Mammary epithelial cell (primary cell): ENCODE measurements at regions of chr14 and their contacts with region 1.

Region 1: GRCh38 chr14:77457522-77458290 is at the starts of genes AHSA1 and VIPAS39:
- DNase-seq: peak; percentile 99
- H3K4me3 ChIP-seq: peak within 1 kb of the TSS; percentile 90 to 96 (median 94)
- H3K27ac ChIP-seq: peak within 1 kb of the TSS; percentile 89
- H3K4me1 ChIP-seq: peaks cover 18% of the 10 kb centered on the region
- H3K27me3 ChIP-seq: no peaks in the 10 kb centered on the region
- CTCF ChIP-seq: no peak
- total RNA-seq, gene AHSA1: 63.7 to 140 TPM
- total RNA-seq, gene VIPAS39: 15.3 to 25.7 TPM

Region 2: GRCh38 chr14:77301103-77301502 is 156.6 kb before region 1 on chr14:
- CTCF ChIA-PET with region 1: no interaction called
- dilution Hi-C with region 1: no loop called
- in situ Hi-C with region 1: no loop called
- intact Hi-C with region 1: loop called (anchors 5 kb)
- DNase-seq: peak; percentile 52
- H3K4me3 ChIP-seq: no peak overlapping the region
- H3K27ac ChIP-seq: no peak overlapping the region
- H3K4me1 ChIP-seq: peaks cover 24% of the 10 kb centered on the region
- H3K27me3 ChIP-seq: no peaks in the 10 kb centered on the region
- CTCF ChIP-seq: peak; percentile 74 to 90

Region 3: GRCh38 chr14:77353469-77354141 is 104.1 kb before region 1 on chr14:
- CTCF ChIA-PET with region 1: no interaction called
- dilution Hi-C with region 1: loop called (anchors 5 kb)
- in situ Hi-C with region 1: no loop called
- intact Hi-C with region 1: no loop called
- DNase-seq: no peak
- H3K4me3 ChIP-seq: no peak overlapping the region
- H3K27ac ChIP-seq: no peak overlapping the region
- H3K4me1 ChIP-seq: no peaks in the 10 kb centered on the region
- H3K27me3 ChIP-seq: no peaks in the 10 kb centered on the region
- CTCF ChIP-seq: no peak

Region 4: GRCh38 chr14:77616454-77617229 is 158.9 kb after region 1 on chr14 and contains the start of gene SPTLC2:
- CTCF ChIA-PET with region 1: no interaction called
- dilution Hi-C with region 1: no loop called
- in situ Hi-C with region 1: no loop called
- intact Hi-C with region 1: loop called (anchors 1 kb)
- DNase-seq: peak; percentile 99
- H3K4me3 ChIP-seq: peak within 1 kb of the TSS; percentile 75 to 79 (median 77)
- H3K27ac ChIP-seq: peak within 1 kb of the TSS; percentile 78
- H3K4me1 ChIP-seq: peaks cover 22% of the 10 kb centered on the region
- H3K27me3 ChIP-seq: no peaks in the 10 kb centered on the region
- CTCF ChIP-seq: peak in 1 of 2 donors; percentile 30
- total RNA-seq, gene SPTLC2: 38.7 to 47.2 TPM

Region 5: DNA sequence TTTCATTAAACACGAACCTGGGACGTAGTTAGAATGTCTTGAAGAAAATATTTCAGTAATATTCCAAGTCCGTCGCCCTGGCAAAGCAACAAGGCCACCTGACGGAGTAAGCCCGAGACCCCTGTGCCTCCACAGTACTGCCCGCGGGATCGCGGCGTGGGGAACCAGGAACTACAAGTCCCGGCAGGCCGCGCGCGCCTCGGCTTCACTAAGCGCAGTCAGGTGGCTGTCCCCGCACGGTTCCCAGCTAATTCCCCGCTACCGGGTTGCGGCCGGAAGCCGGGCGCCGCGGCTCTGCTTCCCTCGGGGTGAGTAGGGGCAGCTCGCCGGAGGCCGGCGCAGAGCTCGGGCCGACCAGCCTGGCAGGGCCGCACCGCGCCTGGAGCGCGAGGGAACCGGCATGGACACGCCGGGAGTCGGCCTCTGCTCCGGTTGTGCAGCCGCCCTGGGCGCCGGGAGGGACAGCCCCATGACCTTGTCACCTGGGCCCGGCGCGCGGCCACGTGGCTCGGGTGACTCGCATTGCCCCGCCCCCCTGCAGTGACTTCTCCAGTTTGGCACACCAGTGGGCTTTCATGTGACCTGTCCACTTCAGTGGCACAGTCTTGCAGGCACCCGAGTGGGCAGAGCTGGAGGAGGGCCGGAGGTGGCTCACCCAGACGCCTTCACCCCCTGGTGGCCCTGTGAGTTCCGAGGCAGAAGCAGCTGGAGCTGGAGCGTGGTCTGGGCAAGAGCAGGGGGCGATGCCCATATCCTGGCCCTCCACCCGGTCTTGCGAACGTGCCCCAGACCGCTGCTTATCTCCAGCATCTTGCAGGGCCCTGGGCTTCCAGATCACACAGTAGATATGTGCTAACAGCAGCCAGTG is 342.4 kb after region 1 on chr14 and contains the start of gene ADCK1:
- CTCF ChIA-PET with region 1: no interaction called
- dilution Hi-C with region 1: no loop called
- in situ Hi-C with region 1: no loop called
- intact Hi-C with region 1: loop called (anchors 5 kb)
- DNase-seq: peak; percentile 70
- H3K4me3 ChIP-seq: peak within 1 kb of the TSS; percentile 37 to 69 (median 64)
- H3K27ac ChIP-seq: peak within 1 kb of the TSS; percentile 32
- H3K4me1 ChIP-seq: peaks cover 6% of the 10 kb centered on the region
- H3K27me3 ChIP-seq: no peaks in the 10 kb centered on the region
- CTCF ChIP-seq: peak in 1 of 2 donors; percentile 57
- total RNA-seq, gene ADCK1: 5.7 to 8.5 TPM